Left lung (tissue), 14 donors: ENCODE measurements at regions of chr1 and their contacts with region 1.

Region 1: GRCh38 chr1:147890177-147890790 is 12.3 kb upstream of the GJA8 start:
- DNase-seq: peak; percentile 70 to 91 (median 84)
- ATAC-seq: peak; percentile 94
- H3K4me3 ChIP-seq: no peak overlapping the region
- H3K27ac ChIP-seq: no peak overlapping the region
- H3K4me1 ChIP-seq: no peaks in the 10 kb centered on the region
- H3K27me3 ChIP-seq: no peaks in the 10 kb centered on the region
- CTCF ChIP-seq: peak; percentile 56 to 58

Region 2: DNA sequence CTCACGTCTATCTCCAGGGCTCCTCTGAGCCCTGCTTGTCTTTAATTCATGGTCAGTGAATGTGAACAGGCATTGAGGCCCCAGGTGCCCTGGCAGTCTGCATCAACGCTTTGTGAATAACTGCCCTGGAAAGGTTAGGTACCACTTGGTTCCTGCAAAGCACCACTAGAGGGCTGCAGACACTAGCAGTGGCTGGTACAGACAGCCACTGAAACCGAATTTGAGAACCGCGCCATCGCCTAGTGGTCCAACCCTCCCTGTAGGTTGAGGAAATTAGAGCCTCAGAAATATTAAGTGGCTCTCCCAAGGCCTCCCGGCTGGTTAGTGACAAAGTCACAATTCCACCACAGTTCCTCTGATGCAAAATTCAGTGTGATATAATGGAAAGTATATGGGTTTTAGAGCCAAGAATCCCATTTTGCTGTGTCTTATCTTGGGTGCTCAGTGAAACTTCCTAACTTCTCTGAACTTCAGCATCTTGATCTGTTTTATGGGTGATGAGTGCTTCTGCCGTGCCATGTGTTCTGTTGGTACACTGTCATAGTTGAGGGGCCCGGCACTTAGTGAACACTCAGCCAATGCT is 395.2 kb before region 1 on chr1:
- intact Hi-C with region 1: loop called in 1 of 2 experiments (anchors 10 kb)
- DNase-seq: peak in 2 of 4 donors; percentile 60 to 84
- ATAC-seq: peak; percentile 97
- H3K4me3 ChIP-seq: no peak overlapping the region
- H3K27ac ChIP-seq: no peak overlapping the region
- H3K4me1 ChIP-seq: peaks cover 0 to 4% of the 10 kb centered on the region in 2 donors
- H3K27me3 ChIP-seq: no peaks in the 10 kb centered on the region
- CTCF ChIP-seq: peak; percentile 84 to 89

Region 3: DNA sequence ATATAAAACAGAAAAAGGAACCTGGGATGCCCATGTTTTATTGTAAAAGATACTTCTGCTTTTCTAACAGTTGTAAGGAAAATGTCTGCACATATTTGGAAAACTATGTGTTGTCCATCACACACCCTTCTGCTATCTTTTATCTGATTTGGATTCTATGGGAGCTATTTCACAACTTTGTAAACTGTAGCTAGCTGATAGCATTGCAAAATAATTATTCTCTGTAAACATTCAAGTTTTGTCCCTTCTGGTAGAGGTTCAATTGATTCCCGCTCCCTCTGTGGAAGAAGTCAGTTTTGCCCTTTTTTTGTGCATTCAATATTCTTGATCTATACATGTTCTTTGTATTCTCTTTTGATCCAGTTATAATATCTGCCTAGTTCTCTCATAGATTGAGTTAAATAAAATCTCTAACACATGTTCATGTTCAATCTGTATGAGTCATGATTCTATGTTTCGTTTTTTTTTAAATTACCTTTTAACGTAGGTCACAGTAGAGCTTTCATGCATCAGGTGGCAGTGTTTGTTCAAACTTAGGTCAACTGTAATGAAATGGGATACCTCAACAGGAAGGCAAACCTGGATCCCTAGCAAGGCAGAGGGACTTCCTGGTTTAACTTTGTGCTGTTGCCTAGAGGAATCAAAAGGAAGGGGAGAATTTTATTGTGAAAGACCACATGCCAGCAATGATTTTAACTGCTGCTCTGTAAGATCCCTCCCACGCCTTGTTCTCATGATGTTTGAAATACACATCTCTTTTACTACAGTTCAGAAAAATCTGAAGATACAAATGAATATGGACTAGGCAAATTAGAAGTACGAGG is 375.0 kb before region 1 on chr1:
- intact Hi-C with region 1: no loop called
- DNase-seq: peak in 2 of 4 donors; percentile 48 to 72
- ATAC-seq: peak; percentile 95
- H3K4me3 ChIP-seq: no peak overlapping the region
- H3K27ac ChIP-seq: peak overlapping the region in 1 of 2 donors; percentile 48
- H3K4me1 ChIP-seq: peaks cover 11 to 14% of the 10 kb centered on the region in 2 donors
- H3K27me3 ChIP-seq: no peaks in the 10 kb centered on the region
- CTCF ChIP-seq: no peak

Region 4: DNA sequence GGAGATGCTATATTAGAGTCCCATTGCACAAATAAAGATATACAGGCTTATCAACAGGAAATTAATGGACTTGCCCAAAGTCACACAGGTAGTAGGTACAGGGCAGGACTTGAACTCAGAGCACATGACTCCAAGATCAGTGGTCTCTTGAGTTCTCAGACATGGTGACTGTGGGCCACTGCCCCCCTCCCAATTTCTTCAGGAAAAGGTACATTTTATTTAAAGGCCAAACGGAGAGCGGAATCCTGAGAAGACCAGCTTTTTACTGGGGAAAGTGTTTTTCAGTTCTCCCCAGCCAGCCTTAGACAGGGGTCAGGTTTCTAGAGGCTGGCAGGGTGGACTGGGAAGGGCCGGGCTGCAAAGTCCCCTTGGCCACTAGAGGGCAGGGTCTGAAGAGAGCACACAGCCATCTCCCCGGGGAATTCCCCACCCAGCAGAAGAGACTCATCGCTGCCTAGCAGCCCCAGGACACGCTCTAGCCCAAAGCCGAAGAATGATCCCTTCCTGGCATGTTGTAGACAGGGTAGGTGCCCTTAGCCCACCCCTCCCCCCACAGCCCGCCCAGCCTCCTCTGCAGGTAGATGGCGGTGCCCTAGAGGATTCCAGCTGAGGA is 249.6 kb before region 1 on chr1:
- intact Hi-C with region 1: loop called in 1 of 2 experiments (anchors 10 kb)
- DNase-seq: peak; percentile 34 to 90 (median 75)
- ATAC-seq: peak; percentile 99
- H3K4me3 ChIP-seq: no peak overlapping the region
- H3K27ac ChIP-seq: no peak overlapping the region
- H3K4me1 ChIP-seq: peaks cover 0 to 17% of the 10 kb centered on the region in 2 donors
- H3K27me3 ChIP-seq: no peaks in the 10 kb centered on the region
- CTCF ChIP-seq: peak; percentile 88 to 91

Region 5: DNA sequence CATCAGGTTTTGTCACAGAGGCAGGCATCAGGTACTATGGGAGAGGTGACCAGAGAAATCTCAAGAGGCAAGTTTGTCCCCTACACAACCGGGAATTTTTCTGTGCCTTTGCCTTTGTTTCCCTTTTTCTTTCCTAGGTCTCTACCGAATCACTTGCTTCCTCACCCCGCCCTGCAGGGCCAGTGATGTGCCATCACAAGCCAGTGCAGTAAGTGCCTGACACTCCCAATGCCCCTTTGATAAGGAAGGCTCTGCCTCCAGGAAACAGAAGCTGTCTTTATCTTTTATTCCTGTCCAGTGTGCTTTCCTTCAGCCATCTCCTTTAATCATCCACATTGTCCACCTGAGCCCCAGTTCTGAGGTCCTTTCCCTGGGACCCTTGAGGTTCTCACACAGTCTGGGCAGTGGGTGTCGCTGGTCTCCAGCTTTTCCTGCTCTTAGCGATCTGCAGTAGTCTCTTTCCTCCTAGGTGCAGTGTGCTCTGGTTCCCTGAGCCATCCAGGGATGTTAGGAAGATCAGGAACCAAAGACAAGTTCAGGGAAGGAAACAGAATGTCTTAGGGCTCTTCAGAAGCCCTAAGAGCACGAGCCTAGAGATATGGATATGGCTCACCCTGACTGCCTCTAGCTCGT is 166.5 kb before region 1 on chr1:
- intact Hi-C with region 1: loop called (anchors 5 to 10 kb)
- DNase-seq: peak in 3 of 4 donors; percentile 37 to 71 (median 38)
- ATAC-seq: peak; percentile 98
- H3K4me3 ChIP-seq: no peak overlapping the region
- H3K27ac ChIP-seq: no peak overlapping the region
- H3K4me1 ChIP-seq: no peaks in the 10 kb centered on the region
- H3K27me3 ChIP-seq: no peaks in the 10 kb centered on the region
- CTCF ChIP-seq: peak; percentile 51 to 59